ENCODE measurements at regions of chr9 and their contacts with region 1.

Region 1: DNA sequence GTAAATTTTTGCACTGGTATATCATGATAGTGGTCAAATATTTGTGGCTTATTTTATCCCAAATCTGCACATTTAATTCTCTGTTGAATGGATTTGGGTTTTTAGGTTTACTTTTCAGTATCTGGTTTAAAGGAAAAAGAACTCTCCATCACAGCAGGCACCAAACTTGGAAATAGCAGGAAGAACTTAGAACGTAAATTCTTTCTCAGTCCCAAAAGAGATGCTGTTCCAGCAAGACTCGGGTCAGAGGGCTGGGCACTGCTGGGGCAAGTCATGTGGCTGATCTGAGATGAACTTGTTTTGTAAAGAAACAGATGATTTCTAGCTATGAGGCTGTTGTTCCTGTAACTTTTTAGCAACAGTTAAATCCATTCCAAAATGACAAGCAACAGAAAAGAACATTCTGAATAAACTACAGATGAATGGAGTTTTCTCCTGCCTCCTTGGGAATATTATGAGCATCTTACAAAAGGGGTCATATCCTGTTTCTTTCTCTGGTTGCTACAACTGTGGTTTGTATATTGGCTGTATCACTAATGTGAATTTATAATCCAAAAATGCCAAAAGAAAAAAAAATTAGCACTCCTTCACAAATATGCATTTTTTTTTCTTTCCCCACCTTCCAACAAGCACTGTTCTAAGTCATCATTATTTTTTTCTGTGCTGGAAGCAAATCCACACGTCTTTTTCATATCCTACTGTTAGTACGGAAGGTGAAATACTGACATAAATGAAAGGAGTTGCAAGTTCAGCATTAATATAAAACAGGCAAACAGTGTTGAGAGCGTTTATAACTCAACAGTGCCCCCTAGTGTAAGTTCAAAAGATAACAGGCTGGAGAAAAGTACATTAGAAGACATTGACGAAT is 31.1 kb downstream of the OR2K2 start:
- DNase-seq: peak; percentile 76
- H3K4me3 ChIP-seq: peak overlapping the region; percentile 51
- H3K27ac ChIP-seq: peak overlapping the region; percentile 46
- H3K4me1 ChIP-seq: peaks cover 29% of the 10 kb centered on the region
- H3K27me3 ChIP-seq: no peaks in the 10 kb centered on the region

Region 2: GRCh38 chr9:110638381-110638954 is 660.5 kb before region 1 on chr9:
- in situ Hi-C with region 1: loop called (anchors 5 kb)
- DNase-seq: peak; percentile 67
- H3K4me3 ChIP-seq: no peak overlapping the region
- H3K27ac ChIP-seq: no peak overlapping the region
- H3K4me1 ChIP-seq: peaks cover 19% of the 10 kb centered on the region
- H3K27me3 ChIP-seq: no peaks in the 10 kb centered on the region

Region 3: GRCh38 chr9:110777196-110777875 is 521.6 kb before region 1 on chr9:
- in situ Hi-C with region 1: no loop called
- DNase-seq: no peak
- H3K4me3 ChIP-seq: no peak overlapping the region
- H3K27ac ChIP-seq: no peak overlapping the region
- H3K4me1 ChIP-seq: peaks cover 6% of the 10 kb centered on the region; the same call in 1 of the 2 replicates
- H3K27me3 ChIP-seq: no peaks in the 10 kb centered on the region

Region 4: GRCh38 chr9:110977259-110977709 is 321.7 kb before region 1 on chr9:
- in situ Hi-C with region 1: no loop called
- DNase-seq: peak; percentile 69
- H3K4me3 ChIP-seq: no peak overlapping the region
- H3K27ac ChIP-seq: no peak overlapping the region
- H3K4me1 ChIP-seq: peaks cover 56% of the 10 kb centered on the region
- H3K27me3 ChIP-seq: no peaks in the 10 kb centered on the region

Region 5: GRCh38 chr9:111056538-111056937 is 242.4 kb before region 1 on chr9:
- in situ Hi-C with region 1: loop called (anchors 10 kb)
- DNase-seq: peak; percentile 39
- H3K4me3 ChIP-seq: 0 out of 2 replicates have a peak overlapping the region, but pooled peaks have one; percentile 10
- H3K27ac ChIP-seq: no peak overlapping the region
- H3K4me1 ChIP-seq: peaks cover 22% of the 10 kb centered on the region
- H3K27me3 ChIP-seq: no peaks in the 10 kb centered on the region

Region 6: DNA sequence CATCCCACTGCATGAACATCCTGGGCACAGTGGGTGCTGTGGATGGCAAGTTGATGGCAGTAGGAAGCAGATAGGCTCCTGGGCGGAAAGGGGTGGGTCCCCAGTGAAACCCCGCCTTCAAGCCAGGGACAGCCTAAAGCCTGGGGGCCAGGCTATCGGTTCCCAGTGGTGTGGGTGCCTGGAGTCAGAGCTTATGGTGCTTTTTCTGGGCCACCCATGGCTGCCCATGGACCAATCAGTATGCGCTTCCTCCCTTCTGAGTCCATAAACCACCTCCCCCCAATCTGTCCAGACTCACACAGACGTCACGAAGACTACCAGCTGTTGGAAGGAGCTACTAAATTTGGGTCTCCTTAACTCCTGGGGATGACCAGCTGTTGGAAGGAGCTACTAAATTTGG is 202.7 kb after region 1 on chr9:
- in situ Hi-C with region 1: no loop called
- DNase-seq: no peak
- H3K4me3 ChIP-seq: no peak overlapping the region
- H3K27ac ChIP-seq: no peak overlapping the region
- H3K4me1 ChIP-seq: no peaks in the 10 kb centered on the region
- H3K27me3 ChIP-seq: no peaks in the 10 kb centered on the region

Measured in GM23248 (cell line).